A549 (cell line): ENCODE measurements at regions of chr6 and their contacts with region 1.

Region 1: DNA sequence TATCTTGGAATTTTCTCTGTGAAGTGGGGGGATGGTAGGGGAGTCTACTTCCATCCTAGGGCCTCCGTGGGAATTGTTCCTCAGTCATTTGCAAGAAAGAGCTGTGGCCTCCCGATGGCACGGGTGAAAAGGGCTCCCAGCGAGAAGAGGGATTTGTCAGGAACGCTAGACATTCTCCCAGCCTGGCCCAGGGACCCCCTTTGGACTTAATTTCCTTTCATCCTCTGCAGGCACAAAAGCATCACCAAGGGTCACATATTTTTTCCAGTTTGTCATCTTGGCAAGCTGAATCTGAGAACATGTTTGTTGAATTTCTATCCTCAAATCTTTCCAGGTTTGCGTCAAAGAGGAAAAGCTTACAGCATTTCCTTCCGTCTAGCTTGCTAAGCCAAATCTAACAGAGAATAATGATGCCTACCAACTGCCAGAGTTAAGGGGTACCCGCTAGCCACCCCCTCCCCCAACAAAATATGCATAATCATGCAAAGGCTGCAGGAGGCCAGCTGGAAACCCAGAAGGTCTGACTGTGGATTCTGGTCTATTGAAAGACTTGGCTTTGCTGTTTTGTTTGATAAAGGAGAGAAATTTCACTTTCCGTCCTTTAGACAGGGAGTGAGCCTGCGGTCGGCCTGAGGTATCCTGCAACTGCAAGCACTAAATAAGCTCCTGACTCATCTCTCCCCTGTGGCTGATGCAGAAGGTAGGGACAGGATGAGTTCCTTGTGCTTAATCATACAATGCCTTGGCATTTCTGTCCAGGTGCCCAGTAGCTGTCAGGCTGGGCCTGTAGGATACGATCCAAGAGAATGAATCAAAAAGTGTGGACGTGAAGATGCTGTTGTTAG is 23.1 kb downstream of the PSMG4 start:
- DNase-seq: peak; percentile 21 to 47
- ATAC-seq: peak; percentile 48 to 66; a peak in 5 of 6 replicates
- H3K4me3 ChIP-seq: no peak overlapping the region
- H3K27ac ChIP-seq: peak overlapping the region in 1 of 2 experiments; percentile 53; a peak in 3 of 6 replicates
- H3K4me1 ChIP-seq: peaks cover 18% of the 10 kb centered on the region
- CTCF ChIP-seq: no peak
- EP300 ChIP-seq: no peak
- POLR2A ChIP-seq: no peak
- RAD21 ChIP-seq: peak in 1 of 2 experiments; percentile 19; a peak in 2 of 5 replicates

Region 2: GRCh38 chr6:3294921-3295871 is 13.3 kb after region 1 on chr6:
- CTCF ChIA-PET with region 1: interaction called, 15 read pairs
- POLR2A ChIA-PET with region 1: no interaction called
- DNase-seq: peak in 1 of 2 experiments; percentile 16
- ATAC-seq: peak; percentile 64 to 76; a peak in 4 of 6 replicates
- H3K4me3 ChIP-seq: no peak overlapping the region
- H3K27ac ChIP-seq: no peak overlapping the region
- H3K4me1 ChIP-seq: peaks cover 13% of the 10 kb centered on the region
- CTCF ChIP-seq: no peak
- EP300 ChIP-seq: no peak
- POLR2A ChIP-seq: no peak
- RAD21 ChIP-seq: 0 out of 5 replicates have a peak, but pooled peaks of 1 of the 2 experiments have one; percentile 10